RWPE1 (cell line): ENCODE measurements at regions of chr11 and their contacts with region 1.

Region 1: DNA sequence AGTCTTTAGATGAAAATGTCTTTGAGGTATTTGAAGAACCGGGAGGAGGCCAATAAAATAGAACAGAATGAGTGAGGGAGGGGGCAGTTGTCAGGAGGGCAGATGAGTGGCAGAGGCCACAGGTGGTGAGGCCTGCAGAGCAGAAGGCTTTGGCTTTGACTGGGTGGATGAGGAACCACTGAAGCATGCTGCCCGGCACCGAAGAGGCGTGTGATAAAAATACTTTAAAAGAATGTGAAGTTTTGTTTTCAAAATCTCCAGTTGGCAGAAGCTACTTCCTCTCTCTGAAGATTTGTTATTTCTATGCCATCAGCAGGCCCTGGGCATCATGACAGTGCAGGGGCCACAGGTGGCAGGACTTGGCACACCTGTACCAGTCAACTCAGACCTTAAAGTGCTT is 6.3 kb downstream of the MS4A12 start:
- DNase-seq: no peak
- H3K27ac ChIP-seq: no peak overlapping the region
- CTCF ChIP-seq: no peak

Region 2: DNA sequence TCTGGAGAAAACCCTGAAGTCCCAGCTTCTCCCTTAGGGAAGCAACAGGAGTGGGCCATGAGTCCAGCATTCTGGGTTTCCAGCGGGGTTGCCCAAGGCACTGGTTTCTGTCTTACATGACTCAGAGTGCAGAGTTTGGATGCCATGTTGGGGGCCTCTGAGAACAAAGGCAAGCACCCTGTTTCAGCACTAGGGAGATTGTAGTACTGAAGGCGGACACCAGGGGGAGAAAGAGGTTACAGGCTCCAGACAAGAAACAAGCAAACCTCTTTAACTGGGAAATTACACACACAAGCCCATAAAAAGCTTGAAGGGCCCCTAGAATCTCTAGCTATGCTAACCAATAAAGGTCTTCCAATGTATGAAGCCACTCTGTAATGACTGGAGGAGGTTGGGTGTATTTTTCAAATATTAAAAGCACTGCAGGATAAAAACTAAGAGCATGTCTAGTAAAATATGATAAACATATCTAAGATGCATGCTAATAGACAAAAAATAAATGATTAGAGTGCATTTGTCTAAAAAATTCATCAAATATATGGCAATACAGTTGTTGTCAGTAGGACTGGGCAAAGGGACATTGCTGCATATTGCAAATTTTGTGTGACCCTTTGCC is 164.7 kb before region 1 on chr11:
- CTCF ChIA-PET with region 1: no interaction called
- POLR2A ChIA-PET with region 1: no interaction called
- DNase-seq: peak; percentile 57
- H3K27ac ChIP-seq: no peak overlapping the region
- CTCF ChIP-seq: peak; percentile 68

Region 3: DNA sequence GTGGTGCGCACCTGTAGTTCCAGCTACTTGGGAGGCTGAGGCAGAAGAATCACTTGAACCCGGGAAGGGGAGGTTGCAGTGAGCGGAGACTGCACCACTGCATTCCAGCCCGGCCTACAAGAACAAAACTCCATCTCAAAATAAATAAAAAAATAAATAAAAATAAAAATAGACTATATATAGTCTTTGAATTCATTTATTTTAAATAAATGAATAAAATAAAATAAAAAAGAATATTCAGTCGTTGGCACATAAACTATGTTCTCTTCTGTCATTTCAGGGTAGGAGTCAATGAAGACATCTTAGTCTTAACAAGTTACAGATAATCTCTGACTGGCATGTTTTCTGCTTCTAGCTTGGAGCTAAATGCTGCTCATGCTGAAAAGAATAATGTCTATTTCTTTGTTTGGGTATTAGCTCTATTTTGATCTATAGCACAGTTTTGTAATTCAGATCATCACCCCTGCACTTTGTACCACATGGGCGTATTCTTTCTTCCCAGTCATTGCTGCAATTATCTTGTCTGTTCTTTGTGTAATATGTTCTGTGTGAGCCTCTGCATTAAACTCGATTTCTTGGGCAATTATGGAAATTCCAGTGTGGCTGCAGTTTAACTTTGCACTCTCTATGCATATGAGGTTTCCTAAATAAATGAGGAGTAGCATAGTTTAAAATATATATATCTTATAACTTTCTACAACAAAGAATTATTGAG is 104.0 kb before region 1 on chr11:
- CTCF ChIA-PET with region 1: interaction called, 10 read pairs
- POLR2A ChIA-PET with region 1: no interaction called
- DNase-seq: no peak
- H3K27ac ChIP-seq: no peak overlapping the region
- CTCF ChIP-seq: no peak

Region 4: GRCh38 chr11:60485986-60486385 is 12.9 kb before region 1 on chr11:
- CTCF ChIA-PET with region 1: no interaction called
- POLR2A ChIA-PET with region 1: no interaction called
- DNase-seq: peak; percentile 13
- H3K27ac ChIP-seq: no peak overlapping the region
- CTCF ChIP-seq: no peak